Cardiac septum (tissue), 1 donor: ENCODE measurements at regions of chr11 and their contacts with region 1.

Region 1: GRCh38 chr11:44950625-44951476 is at the start of gene TP53I11:
- DNase-seq: peak; percentile 95
- total RNA-seq, gene TP53I11: 38.4 TPM

Region 2: DNA sequence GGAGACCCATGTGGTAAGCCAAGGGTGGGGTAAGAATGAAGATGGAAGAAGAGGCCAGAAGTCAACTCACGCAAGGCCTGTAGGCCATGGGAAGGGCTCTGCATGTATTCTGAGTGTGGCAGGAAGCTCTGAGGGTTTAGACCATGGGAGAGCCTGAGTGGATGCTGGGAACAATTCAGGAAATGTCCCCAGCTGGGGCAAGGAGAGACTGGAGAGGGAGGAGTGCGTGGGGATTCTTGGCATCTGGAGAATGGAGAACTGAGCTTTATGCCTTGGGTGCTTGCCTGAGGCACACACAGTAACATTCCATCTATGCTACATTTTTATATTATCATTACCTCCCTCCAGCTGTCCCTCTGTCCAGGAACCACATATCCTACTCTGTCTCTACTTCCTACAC is 435.8 kb before region 1 on chr11:
- intact Hi-C with region 1: no loop called
- DNase-seq: no peak

Region 3: GRCh38 chr11:44977476-44977984 is 26.7 kb after region 1 on chr11:
- intact Hi-C with region 1: loop called (anchors 1 kb)
- DNase-seq: no peak

Region 4: DNA sequence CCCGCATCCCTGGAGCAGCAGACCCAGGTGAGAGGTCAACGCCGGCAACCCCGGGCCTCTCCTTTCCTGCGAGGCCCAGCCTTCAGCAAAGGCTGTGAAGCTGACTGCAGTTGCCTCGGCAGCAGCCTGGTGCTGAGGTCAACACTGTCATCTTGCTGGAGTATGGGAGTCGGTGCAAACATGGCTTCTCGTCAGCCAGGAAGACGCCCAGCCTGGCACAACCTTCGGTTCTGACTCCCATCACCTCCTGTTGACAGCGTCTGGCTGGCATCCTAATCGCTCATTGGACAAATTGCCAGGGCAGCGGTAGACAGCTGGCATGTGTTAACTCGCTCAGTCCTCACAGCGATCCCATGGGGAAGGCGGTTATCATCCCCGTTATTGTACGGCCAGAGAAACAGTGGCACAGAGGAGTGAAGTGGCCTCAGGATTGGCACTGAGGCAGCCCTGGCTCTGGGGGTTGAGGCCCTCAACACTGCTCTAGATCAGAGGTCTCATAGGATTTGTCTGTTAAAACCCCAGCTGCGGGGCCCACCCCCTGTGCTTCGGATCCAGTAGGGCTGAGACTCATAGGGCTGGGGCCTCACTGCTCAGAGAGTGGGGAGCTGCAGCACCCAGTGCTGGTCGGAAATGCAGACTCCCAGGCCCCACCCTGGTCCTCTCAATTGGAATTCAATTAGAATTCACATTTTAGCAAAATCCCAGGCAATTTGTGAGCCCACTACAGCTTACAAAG is 39.1 kb after region 1 on chr11:
- intact Hi-C with region 1: loop called (anchors 2 kb)
- DNase-seq: peak; percentile 90

Region 5: DNA sequence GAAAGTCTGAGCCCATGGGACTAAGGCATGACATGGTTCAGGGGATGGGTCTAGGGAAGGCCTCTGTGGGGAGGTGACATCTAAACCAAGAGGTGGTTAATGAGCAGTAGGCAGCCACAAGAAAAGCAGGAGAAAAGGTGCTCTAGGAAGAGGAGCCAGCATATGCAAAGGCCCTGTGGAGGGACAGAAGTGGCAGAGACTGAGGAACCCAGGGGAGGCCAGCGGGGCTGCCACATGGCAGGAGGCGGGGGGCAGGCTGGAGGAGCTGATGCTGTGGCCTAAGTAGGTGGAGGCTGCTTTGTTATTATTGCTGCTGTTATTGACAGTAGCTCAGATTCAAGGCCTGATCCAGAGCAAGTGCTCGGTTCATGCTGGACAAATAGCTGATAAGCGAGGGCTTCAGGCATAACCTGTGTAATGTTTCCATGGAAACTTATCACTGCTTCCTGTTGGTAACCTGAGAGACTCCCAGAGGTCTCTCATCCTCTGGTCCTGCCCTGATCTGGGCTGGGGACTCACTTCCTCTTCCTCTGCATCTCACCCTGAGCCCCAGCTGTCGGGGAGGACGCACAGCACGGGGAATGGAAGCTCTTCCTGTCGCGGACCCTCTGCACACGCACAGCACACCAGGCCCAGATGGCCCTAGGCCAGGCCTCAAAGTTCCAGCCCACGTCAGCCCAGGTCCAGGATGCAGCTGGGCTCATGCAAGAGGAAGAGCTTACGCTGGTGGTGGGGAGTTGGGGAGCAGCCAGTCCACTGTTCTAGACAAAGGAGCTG is 75.1 kb after region 1 on chr11:
- intact Hi-C with region 1: loop called (anchors 5 kb)
- DNase-seq: no peak